ENCODE measurements at regions of chr1 and their contacts with region 1.

Region 1: DNA sequence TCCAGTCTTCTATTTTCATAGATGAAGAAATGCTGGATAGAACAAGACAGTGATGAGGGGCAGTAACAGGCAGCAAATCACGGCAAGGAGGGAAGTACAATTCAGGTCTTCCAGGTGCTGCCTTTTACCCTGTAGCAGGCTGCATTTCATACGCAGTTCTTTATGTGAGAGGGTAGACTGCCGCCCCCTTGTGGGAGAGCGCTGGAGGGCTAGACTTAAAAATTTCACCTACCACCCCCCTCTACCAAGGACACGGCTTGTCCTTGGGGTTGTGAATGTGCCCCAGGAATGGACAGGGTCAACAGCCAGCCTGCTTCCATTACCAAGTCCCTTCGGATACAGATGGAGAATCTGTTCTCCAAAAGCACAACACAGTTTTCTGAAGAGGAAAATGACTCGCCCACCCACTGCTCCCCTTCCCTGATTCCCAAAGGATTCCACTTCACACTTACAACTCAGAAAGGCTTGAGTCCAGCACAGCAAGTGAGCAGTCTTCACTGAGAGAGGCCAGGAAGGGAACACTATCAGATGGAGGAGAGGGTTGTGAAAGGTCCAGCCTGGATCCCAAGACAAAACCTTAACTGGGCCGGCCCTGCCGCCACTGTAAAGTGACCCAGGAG is 7.4 kb downstream of the WDR77 start:
- DNase-seq: peak; percentile 44 to 75 (median 67)
- ATAC-seq: peak; percentile 95
- H3K4me3 ChIP-seq: no peak overlapping the region
- H3K4me3 Mint-ChIP-seq: no peak overlapping the region
- H3K27ac ChIP-seq: peak overlapping the region; percentile 47
- H3K27ac Mint-ChIP-seq: peak overlapping the region in 8 of 9 donors; percentile 49 to 90 (median 84)
- H3K4me1 ChIP-seq: peaks cover 4 to 7% of the 10 kb centered on the region in 2 donors
- H3K4me1 Mint-ChIP-seq: peaks cover 8 to 49% (median 34%) of the 10 kb centered on the region in 7 donors
- H3K27me3 ChIP-seq: no peaks in the 10 kb centered on the region
- H3K27me3 Mint-ChIP-seq: no peaks in the 10 kb centered on the region

Region 2: DNA sequence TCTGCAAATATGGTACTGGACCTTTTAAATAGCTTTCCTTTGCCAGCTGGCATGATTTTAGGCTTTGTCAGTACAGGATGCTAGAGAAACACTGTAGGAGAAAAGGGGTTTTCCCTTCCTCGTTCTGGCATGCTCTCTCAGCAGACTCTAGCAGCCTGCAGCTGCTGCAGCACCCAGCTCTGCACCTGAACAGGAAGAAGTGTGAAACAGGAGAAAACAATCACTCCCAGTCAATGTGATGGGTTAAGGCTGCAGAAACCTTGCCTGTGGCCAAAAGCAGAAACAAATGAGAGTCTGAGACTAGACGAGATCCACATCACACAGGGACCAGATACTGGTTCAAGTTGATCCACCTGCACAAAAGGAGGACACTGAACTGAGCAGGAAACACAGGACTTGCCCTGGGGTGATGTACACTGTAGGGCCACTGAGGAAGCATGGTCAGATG is 35.3 kb before region 1 on chr1:
- CTCF ChIA-PET with region 1: interaction called, 3 read pairs
- POLR2A ChIA-PET with region 1: interaction called, 4 read pairs
- intact Hi-C with region 1: loop called in 1 of 2 experiments (anchors 1 kb)
- DNase-seq: peak in 8 of 9 donors; percentile 33 to 74 (median 64)
- ATAC-seq: peak; percentile 99
- H3K4me3 ChIP-seq: no peak overlapping the region
- H3K4me3 Mint-ChIP-seq: peak overlapping the region; percentile 29 to 81 (median 61)
- H3K27ac ChIP-seq: peak overlapping the region; percentile 54
- H3K27ac Mint-ChIP-seq: peak overlapping the region in 8 of 9 donors; percentile 67 to 90 (median 78)
- H3K4me1 ChIP-seq: peaks cover 12 to 24% of the 10 kb centered on the region in 2 donors
- H3K4me1 Mint-ChIP-seq: peaks cover 14 to 38% (median 31%) of the 10 kb centered on the region in 7 donors
- H3K27me3 ChIP-seq: no peaks in the 10 kb centered on the region
- H3K27me3 Mint-ChIP-seq: peaks cover 0 to 26% (median 0%) of the 10 kb centered on the region in 5 donors

Region 3: DNA sequence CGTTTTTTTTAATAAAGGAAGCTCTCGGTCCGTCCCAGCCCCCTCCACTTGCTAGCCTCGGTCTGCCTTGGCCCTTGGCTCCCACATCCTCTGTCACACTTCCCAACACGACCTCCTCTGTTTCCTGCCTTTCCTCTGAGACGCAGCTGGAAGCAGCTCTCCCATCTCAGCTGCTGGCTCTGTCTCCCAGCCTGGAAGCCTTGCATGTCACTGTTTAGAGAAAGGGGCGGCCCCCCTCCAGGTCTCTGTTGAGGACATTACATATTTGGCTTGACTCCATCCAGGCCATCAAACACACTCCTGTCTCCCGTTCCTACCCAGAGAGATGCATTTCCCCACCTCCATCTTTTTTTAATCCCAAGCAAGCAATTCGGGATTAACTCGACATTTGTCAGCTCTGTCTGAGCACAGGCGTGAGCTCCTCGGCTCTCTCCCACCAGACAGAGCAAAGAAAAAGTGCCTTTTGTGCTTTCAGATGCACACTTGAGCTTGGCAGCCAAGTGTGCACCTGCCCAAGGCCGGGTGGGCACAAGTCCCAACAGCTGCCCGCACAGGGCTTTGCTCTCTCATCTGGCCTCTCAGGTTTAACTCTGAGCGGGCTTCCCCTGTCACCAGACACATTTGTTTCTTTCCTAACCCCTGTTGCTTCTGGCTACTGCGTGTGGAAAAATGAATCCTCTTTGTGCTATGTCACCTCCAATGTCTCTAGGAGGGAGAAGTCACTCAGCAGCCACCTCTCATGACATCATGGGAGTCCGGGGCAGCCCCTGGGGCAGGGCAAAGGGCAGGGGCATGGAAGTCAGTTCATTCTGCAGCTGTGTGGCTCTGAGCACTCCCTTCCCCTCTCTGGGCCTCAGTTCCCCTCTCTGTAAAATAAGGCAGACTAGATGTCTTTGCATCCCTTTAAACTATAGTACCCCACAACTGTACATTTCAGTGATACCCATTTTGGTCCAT is 439.5 kb after region 1 on chr1:
- CTCF ChIA-PET with region 1: no interaction called
- POLR2A ChIA-PET with region 1: no interaction called
- intact Hi-C with region 1: no loop called
- DNase-seq: no peak
- ATAC-seq: no peak
- H3K4me3 ChIP-seq: no peak overlapping the region
- H3K4me3 Mint-ChIP-seq: no peak overlapping the region
- H3K27ac ChIP-seq: no peak overlapping the region
- H3K27ac Mint-ChIP-seq: no peak overlapping the region
- H3K4me1 ChIP-seq: no peaks in the 10 kb centered on the region
- H3K4me1 Mint-ChIP-seq: no peaks in the 10 kb centered on the region
- H3K27me3 ChIP-seq: no peaks in the 10 kb centered on the region
- H3K27me3 Mint-ChIP-seq: peaks cover 18 to 58% (median 47%) of the 10 kb centered on the region in 5 donors

Measured in naive thymus-derived CD4-positive, alpha-beta T cell (primary cell).